ENCODE measurements at regions of chr7 and their contacts with region 1.

Region 1: DNA sequence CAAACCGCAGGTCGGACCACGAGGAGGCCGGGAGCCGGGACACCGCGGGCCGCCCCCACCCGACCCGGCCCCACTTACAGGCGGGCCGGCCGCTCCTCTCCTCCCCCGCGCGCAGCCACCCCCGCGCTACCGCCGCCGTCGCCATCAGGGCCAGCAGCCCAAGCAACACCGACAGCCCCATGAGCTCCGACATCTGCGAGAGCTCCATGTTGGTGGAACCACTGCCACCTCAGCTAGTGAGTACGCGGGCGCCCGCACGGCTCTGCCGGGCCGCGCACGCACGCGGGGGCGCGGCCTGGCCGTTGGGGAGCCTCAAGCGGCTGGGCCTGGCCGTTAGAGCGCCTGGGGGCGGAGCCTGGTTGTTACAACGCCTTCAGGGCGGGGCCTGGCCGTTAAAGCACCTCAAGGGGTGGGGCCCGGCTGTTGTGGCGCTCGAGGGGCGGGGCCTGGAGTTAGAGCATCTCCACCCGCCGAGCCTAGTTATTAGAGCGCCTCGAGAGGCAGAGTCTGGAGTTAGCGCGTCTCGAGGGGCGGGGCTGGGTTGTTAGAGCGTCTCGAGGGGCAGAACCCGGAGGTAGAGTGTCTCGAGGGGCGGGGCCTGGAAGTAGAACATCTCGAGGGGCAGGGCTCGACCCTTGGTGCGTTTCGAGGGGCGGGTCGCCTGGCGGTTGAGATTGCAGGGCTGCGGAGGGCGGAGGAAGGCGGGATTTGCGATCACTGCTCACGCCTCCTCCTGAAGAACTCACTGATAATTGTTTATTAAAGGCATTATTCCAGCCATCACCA is at the start of gene TBL2:
- DNase-seq: peak; percentile 98 to 99
- ATAC-seq: peak; percentile 96 to 98 (median 98)
- H3K4me3 ChIP-seq: peak within 1 kb of the TSS; percentile 66 to 99 (median 88)
- H3K27ac ChIP-seq: peak within 1 kb of the TSS; percentile 58 to 95 (median 87)
- H3K4me1 ChIP-seq: peaks cover 6 to 52% (median 21%) of the 10 kb centered on the region in 9 donors
- H3K27me3 ChIP-seq: no peaks in the 10 kb centered on the region
- CTCF ChIP-seq: peak in 5 of 9 donors; percentile 9 to 50 (median 45)
- total RNA-seq, gene TBL2: 7.7 to 20.6 (median 10.4) TPM

Region 2: DNA sequence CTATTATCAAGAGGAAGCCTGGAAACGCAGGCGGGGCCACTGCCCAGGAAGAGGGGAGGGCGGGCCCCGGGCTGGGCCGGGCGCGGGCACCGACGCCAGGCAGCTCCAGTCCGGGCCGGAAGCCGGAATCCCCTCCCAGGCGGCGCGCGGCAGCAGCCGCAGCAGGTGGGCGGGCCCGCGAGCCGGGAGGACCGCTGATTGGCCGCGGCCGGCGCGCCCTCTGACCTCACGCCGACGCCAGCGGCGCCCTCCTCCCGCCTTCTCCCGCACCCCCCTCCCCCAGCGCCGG is 21.5 kb before region 1 on chr7:
- intact Hi-C with region 1: loop called in 1 of 10 experiments (anchors 2 kb)
- DNase-seq: peak; percentile 93 to 95
- ATAC-seq: peak; percentile 96 to 98 (median 97)
- H3K4me3 ChIP-seq: peak overlapping the region; percentile 52 to 86 (median 76)
- H3K27ac ChIP-seq: peak overlapping the region; percentile 96 to 100 (median 99)
- H3K4me1 ChIP-seq: peaks cover 3 to 39% (median 30%) of the 10 kb centered on the region in 9 donors
- H3K27me3 ChIP-seq: no peaks in the 10 kb centered on the region
- CTCF ChIP-seq: no peak

Region 3: GRCh38 chr7:73623798-73624668 is 45.5 kb after region 1 on chr7 and contains the start of gene MLXIPL:
- intact Hi-C with region 1: no loop called
- DNase-seq: peak; percentile 57 to 78
- ATAC-seq: peak; percentile 75 to 94 (median 88)
- H3K4me3 ChIP-seq: peak within 1 kb of the TSS; percentile 19 to 56 (median 50)
- H3K27ac ChIP-seq: no peak within 1 kb of the TSS
- H3K4me1 ChIP-seq: peaks cover 0 to 22% (median 20%) of the 10 kb centered on the region in 9 donors
- H3K27me3 ChIP-seq: peaks cover 8 to 85% (median 77%) of the 10 kb centered on the region in 7 donors
- CTCF ChIP-seq: no peak
- total RNA-seq, gene MLXIPL: 0.28 to 8.5 (median 1.9) TPM in 8 of 10 donors, not detected in the others

Region 4: DNA sequence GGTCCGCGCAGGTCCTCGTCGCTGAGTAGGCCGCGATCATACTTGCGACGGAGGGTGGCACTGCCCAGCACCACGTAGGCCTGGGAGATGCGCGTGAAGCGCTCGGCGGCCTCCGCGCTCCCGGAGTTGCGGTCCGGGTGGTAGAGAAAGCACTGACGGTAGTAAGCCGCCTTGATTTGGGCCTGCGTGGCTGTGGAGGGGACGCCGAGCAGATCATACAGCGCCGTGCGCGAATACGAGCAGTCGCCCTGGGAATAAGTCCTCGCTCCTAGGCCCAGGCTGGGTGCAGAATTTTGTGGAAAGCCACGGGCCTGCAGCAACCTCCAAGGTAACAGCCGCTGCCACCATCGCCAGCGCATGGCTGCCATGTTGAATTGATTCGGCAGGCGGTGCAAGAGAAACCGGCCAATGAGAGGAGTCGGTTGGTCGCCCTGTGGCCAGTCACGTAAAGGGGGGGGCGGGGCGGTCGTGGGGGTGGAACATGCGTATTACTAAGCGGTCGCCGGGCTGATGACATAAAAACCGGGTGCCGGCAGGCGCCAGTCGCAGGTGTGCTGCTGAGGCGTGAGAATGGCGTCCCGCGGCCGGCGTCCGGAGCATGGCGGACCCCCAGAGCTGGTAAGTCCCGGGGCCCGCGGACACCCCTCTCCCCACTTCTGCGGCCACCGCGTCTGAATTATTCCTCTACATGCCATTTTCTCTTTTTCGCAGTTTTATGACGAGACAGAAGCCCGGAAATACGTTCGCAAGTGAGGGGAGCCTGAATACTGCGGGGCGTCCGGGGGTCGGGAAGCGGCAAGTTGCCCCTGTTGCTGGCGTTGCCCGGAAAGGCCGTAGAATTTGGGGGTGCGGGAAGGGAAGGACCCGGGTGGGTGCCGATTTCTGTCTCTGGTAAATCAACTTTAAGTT is 104.8 kb after region 1 on chr7 and contains the starts of genes BUD23 and DNAJC30:
- intact Hi-C with region 1: loop called in 1 of 10 experiments (anchors 10 kb)
- DNase-seq: peak; percentile 97 to 98
- ATAC-seq: peak; percentile 95 to 99 (median 98)
- H3K4me3 ChIP-seq: peak within 1 kb of the TSS; percentile 85 to 99 (median 96)
- H3K27ac ChIP-seq: peak within 1 kb of the TSS in 9 of 10 donors; percentile 79 to 93 (median 87)
- H3K4me1 ChIP-seq: peaks cover 10 to 55% (median 33%) of the 10 kb centered on the region in 9 donors
- H3K27me3 ChIP-seq: no peaks in the 10 kb centered on the region
- CTCF ChIP-seq: peak in 4 of 9 donors; percentile 10 to 32 (median 14)
- total RNA-seq, gene BUD23: 63.4 to 89.9 (median 66.8) TPM
- total RNA-seq, gene DNAJC30: 12.1 to 20.8 (median 15.8) TPM